Spleen (tissue), 13 donors: ENCODE measurements at regions of chr2 and their contacts with region 1.

Region 1: GRCh38 chr2:26606847-26607190 is 34.3 kb downstream of the CIB4 start:
- DNase-seq: no peak
- H3K4me3 ChIP-seq: no peak overlapping the region
- H3K27ac ChIP-seq: no peak overlapping the region
- H3K4me1 ChIP-seq: peaks cover 0 to 36% (median 6%) of the 10 kb centered on the region in 6 donors
- H3K27me3 ChIP-seq: peaks cover 0 to 14% (median 0%) of the 10 kb centered on the region in 7 donors
- CTCF ChIP-seq: no peak
- POLR2A ChIP-seq: no peak

Region 2: GRCh38 chr2:26720322-26721166 is 113.7 kb after region 1 on chr2:
- intact Hi-C with region 1: no loop called
- DNase-seq: no peak
- H3K4me3 ChIP-seq: no peak overlapping the region
- H3K27ac ChIP-seq: peak overlapping the region in 7 of 8 donors; percentile 4 to 83 (median 68)
- H3K4me1 ChIP-seq: peaks cover 0 to 59% (median 30%) of the 10 kb centered on the region in 6 donors
- H3K27me3 ChIP-seq: no peaks in the 10 kb centered on the region
- CTCF ChIP-seq: no peak
- POLR2A ChIP-seq: no peak

Region 3: GRCh38 chr2:26745609-26746327 is 138.9 kb after region 1 on chr2:
- intact Hi-C with region 1: loop called (anchors 2 kb)
- DNase-seq: peak; percentile 90
- H3K4me3 ChIP-seq: no peak overlapping the region
- H3K27ac ChIP-seq: no peak overlapping the region
- H3K4me1 ChIP-seq: peaks cover 0 to 14% (median 8%) of the 10 kb centered on the region in 6 donors
- H3K27me3 ChIP-seq: no peaks in the 10 kb centered on the region
- CTCF ChIP-seq: peak; percentile 67 to 93 (median 87)
- POLR2A ChIP-seq: no peak

Region 4: GRCh38 chr2:27042159-27042661 is 435.4 kb after region 1 on chr2:
- intact Hi-C with region 1: no loop called
- DNase-seq: peak; percentile 64
- H3K4me3 ChIP-seq: peak overlapping the region in 1 of 8 donors; percentile 25
- H3K27ac ChIP-seq: peak overlapping the region; percentile 10 to 80 (median 74)
- H3K4me1 ChIP-seq: peaks cover 0 to 34% (median 24%) of the 10 kb centered on the region in 6 donors
- H3K27me3 ChIP-seq: no peaks in the 10 kb centered on the region
- CTCF ChIP-seq: no peak
- POLR2A ChIP-seq: no peak